CD8-positive, alpha-beta T cell (primary cell): ENCODE measurements at regions of chr21 and their contacts with region 1.

Region 1: DNA sequence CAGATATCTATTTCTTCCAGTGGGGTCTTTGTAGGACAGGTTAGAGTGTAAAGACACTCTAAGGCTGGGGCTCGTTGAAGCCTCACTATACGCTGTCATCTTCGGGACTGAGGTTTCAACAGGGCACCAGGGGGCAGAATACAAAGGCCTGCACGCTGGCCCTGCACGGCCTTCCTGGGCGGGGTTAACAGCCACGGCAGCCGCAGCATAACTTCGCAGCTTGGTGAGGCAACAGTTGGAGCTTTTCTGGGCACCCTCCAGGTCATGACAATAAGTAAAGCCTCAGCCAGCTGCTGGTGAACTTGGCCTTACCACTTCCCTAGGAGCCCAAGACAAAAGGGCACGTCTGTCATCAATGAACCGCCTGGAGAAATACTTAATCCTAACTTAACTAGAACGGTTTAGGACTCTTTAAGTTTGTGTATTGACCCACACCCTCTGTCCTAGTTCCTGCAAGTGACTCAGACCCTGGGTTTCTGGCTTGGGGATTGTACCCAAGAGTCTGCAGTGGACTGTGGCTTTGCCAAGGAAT is 2.3 kb upstream of the RUNX1 start:
- DNase-seq: peak; percentile 68 to 94 (median 84)
- ATAC-seq: peak; percentile 41
- H3K4me3 ChIP-seq: no peak overlapping the region
- H3K4me3 Mint-ChIP-seq: peak overlapping the region; percentile 95
- H3K27ac ChIP-seq: peak overlapping the region in 1 of 2 experiments; percentile 79
- H3K27ac Mint-ChIP-seq: peak overlapping the region; percentile 97
- H3K4me1 ChIP-seq: peaks cover 29% of the 10 kb centered on the region
- H3K4me1 Mint-ChIP-seq: peaks cover 49% of the 10 kb centered on the region
- H3K27me3 ChIP-seq: no peaks in the 10 kb centered on the region
- H3K27me3 Mint-ChIP-seq: no peaks in the 10 kb centered on the region
- CTCF ChIP-seq: peak; percentile 58

Region 2: GRCh38 chr21:33931799-33932390 is 1119.5 kb before region 1 on chr21:
- CTCF ChIA-PET with region 1: no interaction called
- POLR2A ChIA-PET with region 1: no interaction called
- intact Hi-C with region 1: loop called in 1 of 2 experiments (anchors 10 kb)
- DNase-seq: peak in 2 of 9 experiments; percentile 27 to 34
- ATAC-seq: peak; percentile 26
- H3K4me3 ChIP-seq: peak overlapping the region; percentile 70 to 85
- H3K4me3 Mint-ChIP-seq: peak overlapping the region; percentile 94
- H3K27ac ChIP-seq: peak overlapping the region; percentile 85 to 90
- H3K27ac Mint-ChIP-seq: peak overlapping the region; percentile 99
- H3K4me1 ChIP-seq: peaks cover 42% of the 10 kb centered on the region
- H3K4me1 Mint-ChIP-seq: peaks cover 46% of the 10 kb centered on the region
- H3K27me3 ChIP-seq: no peaks in the 10 kb centered on the region
- H3K27me3 Mint-ChIP-seq: no peaks in the 10 kb centered on the region
- CTCF ChIP-seq: no peak

Region 3: DNA sequence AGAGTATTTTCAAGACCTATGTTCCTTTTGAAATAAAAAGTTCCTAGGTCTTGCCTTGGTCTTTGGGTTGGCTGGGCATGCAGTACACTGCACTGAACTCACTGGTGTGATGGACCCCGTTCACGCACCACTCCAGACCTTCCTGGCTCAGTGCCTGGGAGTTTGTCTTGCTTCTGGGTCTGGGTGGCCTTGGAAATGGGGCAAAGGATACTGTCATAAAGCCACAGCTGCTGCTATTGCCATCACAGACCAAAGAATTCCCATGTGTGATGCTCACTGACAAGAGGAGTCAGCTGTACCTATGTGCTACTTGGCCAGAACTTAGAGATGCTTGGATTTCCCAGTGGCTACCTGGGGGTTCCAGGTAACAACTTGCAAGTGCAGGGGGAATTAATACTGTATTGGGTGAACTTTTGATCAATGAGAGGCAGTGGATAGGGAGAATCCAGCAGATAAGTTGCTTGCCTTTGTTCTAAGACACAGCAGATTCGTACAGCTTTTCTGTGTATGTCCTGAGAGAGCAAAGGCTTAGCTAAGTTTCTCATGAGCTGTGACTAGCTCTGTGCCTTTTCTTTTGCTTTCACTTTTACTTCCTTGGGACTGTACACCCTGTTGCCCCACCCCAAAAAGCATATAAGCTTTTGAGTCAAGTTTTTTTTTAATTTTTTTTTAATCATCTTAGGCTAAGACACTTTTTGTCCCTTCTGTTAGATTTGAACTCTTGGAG is 117.6 kb before region 1 on chr21:
- CTCF ChIA-PET with region 1: interaction called, 3 read pairs
- POLR2A ChIA-PET with region 1: interaction called, 26 read pairs
- intact Hi-C with region 1: loop called (anchors 2 to 5 kb)
- DNase-seq: peak in 4 of 9 experiments; percentile 10 to 87 (median 64)
- ATAC-seq: peak; percentile 88
- H3K4me3 ChIP-seq: peak overlapping the region; percentile 7 to 29
- H3K4me3 Mint-ChIP-seq: peak overlapping the region; percentile 80
- H3K27ac ChIP-seq: peak overlapping the region; percentile 39 to 90
- H3K27ac Mint-ChIP-seq: peak overlapping the region; percentile 99
- H3K4me1 ChIP-seq: peaks cover 60% of the 10 kb centered on the region
- H3K4me1 Mint-ChIP-seq: peaks cover 83% of the 10 kb centered on the region
- H3K27me3 ChIP-seq: no peaks in the 10 kb centered on the region
- H3K27me3 Mint-ChIP-seq: no peaks in the 10 kb centered on the region
- CTCF ChIP-seq: no peak

Region 4: DNA sequence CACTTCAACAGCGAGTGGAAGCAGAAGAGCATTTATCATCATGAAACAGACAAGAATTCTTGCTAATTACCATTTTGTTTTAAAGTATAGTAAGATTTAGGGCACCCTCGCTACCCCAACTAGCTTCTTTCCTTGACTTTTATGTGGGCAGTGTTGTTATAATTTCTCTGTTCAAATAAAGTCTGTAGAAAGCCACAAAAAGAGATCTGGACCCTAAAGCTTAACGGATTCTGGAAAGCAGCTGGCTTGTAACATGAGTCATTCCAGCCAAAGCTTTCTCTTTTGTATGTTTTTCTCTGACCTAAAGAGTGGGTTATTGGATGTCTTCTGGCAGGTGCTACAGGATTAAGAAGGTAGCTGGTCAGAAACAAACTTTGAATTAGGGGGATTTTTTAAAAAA is 39.7 kb before region 1 on chr21:
- CTCF ChIA-PET with region 1: interaction called, 3 read pairs
- POLR2A ChIA-PET with region 1: interaction called, 6 read pairs
- intact Hi-C with region 1: loop called in 1 of 2 experiments (anchors 5 kb)
- DNase-seq: no peak
- ATAC-seq: no peak
- H3K4me3 ChIP-seq: no peak overlapping the region
- H3K4me3 Mint-ChIP-seq: peak overlapping the region; percentile 51
- H3K27ac ChIP-seq: no peak overlapping the region
- H3K27ac Mint-ChIP-seq: peak overlapping the region; percentile 84
- H3K4me1 ChIP-seq: peaks cover 69% of the 10 kb centered on the region
- H3K4me1 Mint-ChIP-seq: peaks cover 95% of the 10 kb centered on the region
- H3K27me3 ChIP-seq: no peaks in the 10 kb centered on the region
- H3K27me3 Mint-ChIP-seq: no peaks in the 10 kb centered on the region
- CTCF ChIP-seq: no peak

Region 5: DNA sequence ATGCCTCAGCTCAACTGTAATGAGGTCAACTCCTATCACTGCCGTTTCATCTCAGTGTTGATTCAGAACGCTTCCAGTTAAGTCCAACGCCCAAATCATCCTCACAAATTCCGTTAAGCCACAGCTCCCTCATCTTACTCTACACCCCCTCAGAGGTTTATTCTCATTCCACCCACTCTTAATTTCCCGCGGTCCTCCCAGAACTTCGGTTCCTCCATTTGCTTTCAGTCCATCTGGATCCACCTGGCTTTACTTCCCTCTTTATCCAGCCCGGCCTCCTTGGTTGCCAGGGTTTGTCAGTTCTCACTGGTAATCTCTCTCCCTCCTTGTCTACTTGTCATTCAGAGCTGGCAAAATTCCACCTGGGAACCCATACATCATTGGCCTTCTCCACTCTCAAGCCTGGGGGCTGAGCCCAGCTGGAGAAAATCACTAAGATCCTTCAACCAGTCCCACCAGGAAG is 49.0 kb after region 1 on chr21:
- CTCF ChIA-PET with region 1: no interaction called
- POLR2A ChIA-PET with region 1: no interaction called
- intact Hi-C with region 1: loop called in 1 of 2 experiments (anchors 2 kb)
- DNase-seq: no peak
- ATAC-seq: no peak
- H3K4me3 ChIP-seq: no peak overlapping the region
- H3K4me3 Mint-ChIP-seq: no peak overlapping the region
- H3K27ac ChIP-seq: no peak overlapping the region
- H3K27ac Mint-ChIP-seq: no peak overlapping the region
- H3K4me1 ChIP-seq: peaks cover 17% of the 10 kb centered on the region
- H3K4me1 Mint-ChIP-seq: no peaks in the 10 kb centered on the region
- H3K27me3 ChIP-seq: no peaks in the 10 kb centered on the region
- H3K27me3 Mint-ChIP-seq: no peaks in the 10 kb centered on the region
- CTCF ChIP-seq: no peak

Region 6: GRCh38 chr21:35400233-35400957 is 349.0 kb after region 1 on chr21:
- CTCF ChIA-PET with region 1: interaction called, 38 read pairs
- POLR2A ChIA-PET with region 1: interaction called, 3 read pairs
- intact Hi-C with region 1: loop called (anchors 1 to 2 kb)
- DNase-seq: peak in 8 of 9 experiments; percentile 2 to 81 (median 34)
- ATAC-seq: peak; percentile 89
- H3K4me3 ChIP-seq: no peak overlapping the region
- H3K4me3 Mint-ChIP-seq: no peak overlapping the region
- H3K27ac ChIP-seq: no peak overlapping the region
- H3K27ac Mint-ChIP-seq: no peak overlapping the region
- H3K4me1 ChIP-seq: no peaks in the 10 kb centered on the region
- H3K4me1 Mint-ChIP-seq: no peaks in the 10 kb centered on the region
- H3K27me3 ChIP-seq: no peaks in the 10 kb centered on the region
- H3K27me3 Mint-ChIP-seq: no peaks in the 10 kb centered on the region
- CTCF ChIP-seq: peak; percentile 67

Region 7: GRCh38 chr21:36113647-36114428 is 1062.5 kb after region 1 on chr21:
- CTCF ChIA-PET with region 1: no interaction called
- POLR2A ChIA-PET with region 1: no interaction called
- intact Hi-C with region 1: loop called in 1 of 2 experiments (anchors 2 kb)
- DNase-seq: peak in 6 of 9 experiments; percentile 26 to 90 (median 62)
- ATAC-seq: peak; percentile 82
- H3K4me3 ChIP-seq: peak overlapping the region; percentile 51 to 71
- H3K4me3 Mint-ChIP-seq: peak overlapping the region; percentile 81
- H3K27ac ChIP-seq: peak overlapping the region; percentile 57 to 61
- H3K27ac Mint-ChIP-seq: peak overlapping the region; percentile 91
- H3K4me1 ChIP-seq: peaks cover 37% of the 10 kb centered on the region
- H3K4me1 Mint-ChIP-seq: peaks cover 32% of the 10 kb centered on the region
- H3K27me3 ChIP-seq: no peaks in the 10 kb centered on the region
- H3K27me3 Mint-ChIP-seq: no peaks in the 10 kb centered on the region
- CTCF ChIP-seq: no peak